ENCODE measurements at regions of chr2 and their contacts with region 1.

Region 1: GRCh38 chr2:96859338-96859649 is 1.5 kb upstream of the ANKRD39 start:
- DNase-seq: peak in 16 of 42 donors; percentile 18 to 77 (median 49)

Region 2: GRCh38 chr2:96816128-96816835 is 43.0 kb before region 1 on chr2 and contains the start of gene CNNM3:
- intact Hi-C with region 1: loop called (anchors 2 kb)
- DNase-seq: peak; percentile 89 to 99 (median 98)

Region 3: DNA sequence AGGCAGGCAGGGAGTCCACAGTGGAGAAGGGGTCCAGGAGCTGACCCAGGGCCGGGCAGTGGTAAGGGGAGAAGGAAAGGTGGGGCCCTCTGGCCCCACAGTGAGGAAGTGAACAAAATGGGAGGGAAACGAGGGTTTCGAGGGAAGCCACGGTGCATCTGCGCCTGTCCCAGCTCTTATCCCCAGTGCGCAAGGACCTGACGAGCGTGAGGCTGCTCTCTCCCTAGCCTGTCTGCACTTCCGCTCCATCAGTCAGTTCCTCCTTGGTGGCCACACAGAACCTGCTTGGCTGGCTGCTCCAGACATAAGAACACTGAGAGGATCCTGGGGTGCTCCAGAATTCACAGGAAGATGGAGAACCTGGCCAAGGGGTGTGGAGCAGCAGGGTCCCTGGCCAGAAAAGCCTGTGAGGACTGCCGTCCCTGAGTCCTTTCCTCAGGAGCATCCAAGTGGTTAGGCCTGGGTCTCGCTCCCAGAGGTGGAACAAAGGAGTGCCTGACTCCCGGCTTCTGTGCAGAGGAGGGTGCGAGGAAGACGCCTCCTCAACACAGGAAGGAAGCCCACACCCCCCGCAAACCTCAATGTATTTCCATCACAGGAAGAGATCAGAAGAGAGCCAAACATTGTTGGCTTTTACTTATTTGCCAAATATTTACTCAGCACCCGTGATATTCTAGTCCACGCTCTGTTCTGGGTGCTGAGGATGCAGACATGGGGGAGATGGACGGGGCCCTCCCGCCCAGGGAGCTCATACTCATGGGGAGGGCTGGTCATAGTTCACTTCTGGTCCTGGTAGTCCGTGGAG is 54.3 kb after region 1 on chr2:
- intact Hi-C with region 1: loop called (anchors 2 kb)
- DNase-seq: peak in 32 of 42 donors; percentile 36 to 78 (median 60)

Region 4: DNA sequence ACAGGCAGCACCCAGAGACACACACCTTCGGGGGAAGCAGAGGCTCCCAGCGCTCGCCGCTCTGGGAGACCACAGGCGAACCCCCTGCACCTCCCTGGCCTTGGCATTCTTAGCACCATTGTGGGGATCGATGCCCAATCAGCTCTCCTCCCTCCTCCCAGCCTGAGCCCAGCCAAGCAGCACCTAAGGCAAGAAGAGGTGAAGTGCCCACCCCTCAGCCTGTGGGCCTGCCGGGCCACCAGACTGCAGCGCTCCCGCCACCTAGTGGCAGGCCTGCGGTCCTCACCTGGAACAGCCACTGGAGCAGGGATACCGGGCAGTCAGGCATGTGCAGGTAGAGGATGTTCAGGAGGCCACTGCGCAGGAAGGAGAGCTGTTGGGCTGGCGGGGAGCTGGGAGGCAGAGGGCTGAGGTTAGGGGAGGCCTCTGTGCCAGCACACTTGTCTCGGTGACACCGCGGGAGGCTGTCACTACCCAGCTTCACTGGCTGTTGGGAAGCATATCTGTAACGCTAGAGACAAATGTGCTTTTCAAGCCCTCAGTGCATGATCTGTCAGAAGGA is 91.9 kb after region 1 on chr2:
- intact Hi-C with region 1: loop called (anchors 2 kb)
- DNase-seq: peak; percentile 72 to 94 (median 88)